ENCODE measurements at regions of chr22 and their contacts with region 1.

Region 1: GRCh38 chr22:43385770-43386641 is 25.8 kb upstream of the MPPED1 start:
- DNase-seq: peak; percentile 77
- H3K4me3 Mint-ChIP-seq: no peak overlapping the region
- H3K27ac Mint-ChIP-seq: no peak overlapping the region
- H3K4me1 Mint-ChIP-seq: peaks cover 10% of the 10 kb centered on the region
- H3K27me3 Mint-ChIP-seq: peaks cover 42% of the 10 kb centered on the region

Region 2: GRCh38 chr22:43197271-43197941 is 188.6 kb before region 1 on chr22:
- CTCF ChIA-PET with region 1: no interaction called
- POLR2A ChIA-PET with region 1: no interaction called
- DNase-seq: no peak
- H3K4me3 Mint-ChIP-seq: no peak overlapping the region
- H3K27ac Mint-ChIP-seq: no peak overlapping the region
- H3K4me1 Mint-ChIP-seq: no peaks in the 10 kb centered on the region
- H3K27me3 Mint-ChIP-seq: peaks cover 17% of the 10 kb centered on the region

Region 3: GRCh38 chr22:43230971-43231723 is 154.9 kb before region 1 on chr22:
- CTCF ChIA-PET with region 1: interaction called, 16 read pairs
- POLR2A ChIA-PET with region 1: no interaction called
- DNase-seq: peak; percentile 73
- H3K4me3 Mint-ChIP-seq: no peak overlapping the region
- H3K27ac Mint-ChIP-seq: no peak overlapping the region
- H3K4me1 Mint-ChIP-seq: peaks cover 4% of the 10 kb centered on the region
- H3K27me3 Mint-ChIP-seq: peaks cover 3% of the 10 kb centered on the region

Region 4: DNA sequence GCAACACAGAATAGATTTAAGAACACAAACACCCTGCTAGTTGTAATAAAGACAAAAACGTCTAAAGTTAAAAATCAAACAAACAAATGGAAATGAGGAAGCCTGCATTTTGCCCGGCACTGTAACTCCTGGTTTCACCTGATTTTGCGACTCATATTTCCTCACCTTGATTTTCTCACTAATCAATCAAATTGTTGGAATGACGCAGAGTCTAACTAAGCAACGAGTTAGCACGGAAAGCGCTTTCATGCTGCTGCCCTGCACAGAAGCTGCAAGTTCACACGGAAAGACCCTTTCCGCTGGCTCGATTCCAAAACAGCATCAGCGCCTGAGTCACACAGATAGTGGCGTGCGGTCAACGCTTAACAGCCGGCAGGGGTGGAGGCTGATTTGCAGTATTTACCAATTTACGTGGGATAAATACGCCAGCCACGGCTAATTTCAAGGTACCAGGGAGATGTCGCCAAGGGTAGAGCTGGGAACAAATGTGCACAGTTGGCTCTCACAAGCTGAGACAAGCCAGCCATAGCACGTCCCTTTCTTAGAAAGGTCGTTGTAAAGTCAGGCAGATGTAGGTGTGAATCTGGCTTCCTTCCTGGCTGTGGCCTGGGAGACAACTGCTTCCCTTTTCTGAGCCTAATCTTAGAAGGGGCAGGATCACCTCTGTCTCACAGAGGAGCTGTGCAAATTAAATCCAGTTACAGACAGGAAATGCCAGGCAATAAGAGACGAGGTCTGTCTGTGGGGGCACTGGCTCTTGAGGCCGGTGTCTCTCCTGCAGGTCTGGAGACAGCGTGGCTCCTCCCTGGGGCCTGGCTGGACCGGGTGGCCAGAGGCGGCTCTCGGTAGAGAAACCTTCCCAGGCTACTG is 122.1 kb before region 1 on chr22:
- CTCF ChIA-PET with region 1: interaction called, 13 read pairs
- POLR2A ChIA-PET with region 1: interaction called, 4 read pairs
- DNase-seq: peak; percentile 90
- H3K4me3 Mint-ChIP-seq: peak overlapping the region; percentile 63
- H3K27ac Mint-ChIP-seq: peak overlapping the region; percentile 85
- H3K4me1 Mint-ChIP-seq: peaks cover 32% of the 10 kb centered on the region
- H3K27me3 Mint-ChIP-seq: peaks cover 9% of the 10 kb centered on the region

Measured in activated CD4-positive, alpha-beta memory T cell treated with anti-CD3 and anti-CD28 coated beads, Interleukin-2, amount 10 ng/mL, durations not matched to agents 7 days and 5 days (primary cell).